WTC11 (cell line): ENCODE measurements at regions of chr10 and their contacts with region 1.

Region 1: GRCh38 chr10:113385021-113385999 is 167.5 kb upstream of the HABP2 start:
- DNase-seq: peak; percentile 82
- ATAC-seq: peak; percentile 99
- H3K4me3 Mint-ChIP-seq: no peak overlapping the region
- H3K27ac Mint-ChIP-seq: no peak overlapping the region
- H3K4me1 Mint-ChIP-seq: peaks cover 17% of the 10 kb centered on the region
- H3K27me3 Mint-ChIP-seq: no peaks in the 10 kb centered on the region
- CTCF ChIP-seq: peak; percentile 67

Region 2: DNA sequence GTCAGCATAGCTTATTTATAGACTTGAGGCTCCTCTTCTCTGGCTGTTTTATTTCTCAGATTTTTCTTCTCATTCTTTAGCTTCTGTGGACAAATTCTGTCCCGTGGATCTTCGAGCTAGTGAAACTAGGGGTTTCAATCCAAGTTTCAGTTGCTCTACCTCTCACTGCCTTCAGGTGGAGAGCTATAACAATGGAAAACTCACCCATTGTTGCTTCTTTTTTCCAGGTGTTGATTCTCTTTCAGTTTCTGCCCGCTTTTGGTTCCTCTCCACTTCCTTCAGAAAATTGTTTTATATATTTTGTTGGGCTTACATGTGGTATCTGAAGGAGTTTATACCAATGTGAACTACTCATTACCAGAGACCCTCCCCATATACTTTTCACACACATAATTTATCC is 169.2 kb before region 1 on chr10:
- CTCF ChIA-PET with region 1: interaction called, 21 read pairs
- POLR2A ChIA-PET with region 1: no interaction called
- DNase-seq: no peak
- ATAC-seq: peak; percentile 61
- H3K4me3 Mint-ChIP-seq: no peak overlapping the region
- H3K27ac Mint-ChIP-seq: peak overlapping the region; percentile 31; the same call in 1 of the 2 replicates
- H3K4me1 Mint-ChIP-seq: no peaks in the 10 kb centered on the region; the same call in 1 of the 2 replicates
- H3K27me3 Mint-ChIP-seq: no peaks in the 10 kb centered on the region; the same call in 1 of the 2 replicates
- CTCF ChIP-seq: no peak

Region 3: DNA sequence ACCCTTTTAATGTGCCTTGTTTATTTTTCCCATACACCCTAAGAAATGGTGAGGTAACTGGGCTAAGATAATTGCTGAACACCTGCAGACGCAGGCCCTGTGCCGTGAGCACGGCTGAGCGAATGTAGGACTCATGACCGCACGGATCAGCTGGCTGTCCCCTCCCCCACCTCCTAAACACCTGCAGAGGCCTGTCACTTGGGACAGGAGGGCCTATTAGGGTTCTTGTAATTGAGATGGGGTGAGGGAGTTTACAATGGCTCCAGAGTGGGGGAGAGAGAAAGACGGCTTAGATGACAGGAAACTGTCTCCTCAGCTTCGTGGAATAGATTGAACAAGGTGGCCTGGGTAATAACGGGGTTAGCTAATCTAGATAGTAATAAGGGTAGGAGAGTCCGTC is 124.1 kb before region 1 on chr10:
- CTCF ChIA-PET with region 1: no interaction called
- POLR2A ChIA-PET with region 1: no interaction called
- DNase-seq: no peak
- ATAC-seq: no peak
- H3K4me3 Mint-ChIP-seq: no peak overlapping the region
- H3K27ac Mint-ChIP-seq: no peak overlapping the region
- H3K4me1 Mint-ChIP-seq: peaks cover 19% of the 10 kb centered on the region
- H3K27me3 Mint-ChIP-seq: no peaks in the 10 kb centered on the region
- CTCF ChIP-seq: no peak

Region 4: DNA sequence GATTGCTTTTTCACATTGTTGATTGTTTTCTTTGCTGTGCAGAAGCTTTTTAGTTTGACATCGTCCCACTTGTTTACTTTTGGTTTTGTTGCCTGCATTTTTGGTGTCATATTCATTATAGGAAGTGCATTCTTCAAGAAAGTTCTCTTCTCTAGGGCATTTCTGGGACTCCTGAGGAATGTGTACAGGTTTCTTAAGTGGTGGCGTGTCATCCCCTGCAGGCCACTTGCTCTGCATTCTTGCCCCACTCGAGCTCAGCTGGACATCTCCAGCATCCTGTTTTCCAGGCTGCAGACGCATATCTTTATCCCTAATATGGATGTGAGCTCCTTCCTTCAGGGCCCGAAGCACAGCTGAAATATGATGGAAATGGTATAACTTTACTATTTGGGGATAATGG is 88.1 kb before region 1 on chr10:
- CTCF ChIA-PET with region 1: interaction called, 13 read pairs
- POLR2A ChIA-PET with region 1: no interaction called
- DNase-seq: no peak
- ATAC-seq: no peak
- H3K4me3 Mint-ChIP-seq: no peak overlapping the region
- H3K27ac Mint-ChIP-seq: no peak overlapping the region
- H3K4me1 Mint-ChIP-seq: peaks cover 19% of the 10 kb centered on the region
- H3K27me3 Mint-ChIP-seq: no peaks in the 10 kb centered on the region
- CTCF ChIP-seq: no peak

Region 5: DNA sequence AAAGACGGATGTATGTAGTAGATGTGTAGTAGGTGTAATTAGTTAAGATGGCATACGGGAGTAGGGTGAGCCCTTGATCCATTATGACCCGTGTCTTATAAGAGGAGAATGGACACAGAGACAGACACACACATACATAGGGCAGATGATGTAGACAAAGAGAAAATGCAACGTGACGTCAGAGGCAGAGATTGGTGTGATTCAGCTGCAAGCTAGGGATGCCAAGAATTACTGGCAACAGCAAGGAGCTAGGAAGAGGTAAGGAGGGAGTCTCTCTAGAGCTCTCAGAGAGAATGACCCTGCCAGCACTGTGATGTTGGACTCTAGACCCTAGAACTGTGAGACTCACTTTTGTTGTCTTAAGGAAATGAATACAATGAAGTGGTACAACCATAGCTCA is 79.4 kb before region 1 on chr10:
- CTCF ChIA-PET with region 1: interaction called, 13 read pairs
- POLR2A ChIA-PET with region 1: no interaction called
- DNase-seq: no peak
- ATAC-seq: no peak
- H3K4me3 Mint-ChIP-seq: no peak overlapping the region
- H3K27ac Mint-ChIP-seq: no peak overlapping the region
- H3K4me1 Mint-ChIP-seq: peaks cover 6% of the 10 kb centered on the region; the same call in 1 of the 2 replicates
- H3K27me3 Mint-ChIP-seq: no peaks in the 10 kb centered on the region
- CTCF ChIP-seq: no peak

Region 6: GRCh38 chr10:113362645-113363433 is 22.5 kb before region 1 on chr10:
- CTCF ChIA-PET with region 1: interaction called, 15 read pairs
- POLR2A ChIA-PET with region 1: no interaction called
- DNase-seq: no peak
- ATAC-seq: no peak
- H3K4me3 Mint-ChIP-seq: no peak overlapping the region
- H3K27ac Mint-ChIP-seq: no peak overlapping the region
- H3K4me1 Mint-ChIP-seq: peaks cover 6% of the 10 kb centered on the region
- H3K27me3 Mint-ChIP-seq: peaks cover 5% of the 10 kb centered on the region; the same call in 1 of the 2 replicates
- CTCF ChIP-seq: no peak